A549 (cell line): ENCODE measurements at regions of chr10 and their contacts with region 1.

Region 1: GRCh38 chr10:71893920-71894319 is 42.9 kb upstream of the PSAP start:
- DNase-seq: no peak
- ATAC-seq: no peak
- H3K4me3 ChIP-seq: no peak overlapping the region
- H3K27ac ChIP-seq: no peak overlapping the region
- H3K4me1 ChIP-seq: peaks cover 17% of the 10 kb centered on the region
- CTCF ChIP-seq: no peak
- EP300 ChIP-seq: no peak
- POLR2A ChIP-seq: no peak
- RAD21 ChIP-seq: no peak

Region 2: GRCh38 chr10:71766702-71767419 is 127.1 kb before region 1 on chr10:
- CTCF ChIA-PET with region 1: interaction called, 33 read pairs
- POLR2A ChIA-PET with region 1: no interaction called
- DNase-seq: peak; percentile 85 to 98
- ATAC-seq: peak; percentile 81 to 88
- H3K4me3 ChIP-seq: no peak overlapping the region
- H3K27ac ChIP-seq: peak overlapping the region; percentile 98 to 99
- H3K4me1 ChIP-seq: peaks cover 89% of the 10 kb centered on the region
- CTCF ChIP-seq: no peak
- EP300 ChIP-seq: peak; percentile 75 to 87; a peak in 3 of 5 replicates
- POLR2A ChIP-seq: no peak
- RAD21 ChIP-seq: peak; percentile 0 to 16; a peak in 2 of 5 replicates

Region 3: GRCh38 chr10:71829171-71829570 is 64.7 kb before region 1 on chr10:
- CTCF ChIA-PET with region 1: interaction called, 217 read pairs
- POLR2A ChIA-PET with region 1: no interaction called
- DNase-seq: no peak
- ATAC-seq: no peak
- H3K4me3 ChIP-seq: no peak overlapping the region
- H3K27ac ChIP-seq: no peak overlapping the region
- H3K4me1 ChIP-seq: peaks cover 18% of the 10 kb centered on the region
- CTCF ChIP-seq: no peak
- EP300 ChIP-seq: no peak
- POLR2A ChIP-seq: no peak
- RAD21 ChIP-seq: no peak

Region 4: DNA sequence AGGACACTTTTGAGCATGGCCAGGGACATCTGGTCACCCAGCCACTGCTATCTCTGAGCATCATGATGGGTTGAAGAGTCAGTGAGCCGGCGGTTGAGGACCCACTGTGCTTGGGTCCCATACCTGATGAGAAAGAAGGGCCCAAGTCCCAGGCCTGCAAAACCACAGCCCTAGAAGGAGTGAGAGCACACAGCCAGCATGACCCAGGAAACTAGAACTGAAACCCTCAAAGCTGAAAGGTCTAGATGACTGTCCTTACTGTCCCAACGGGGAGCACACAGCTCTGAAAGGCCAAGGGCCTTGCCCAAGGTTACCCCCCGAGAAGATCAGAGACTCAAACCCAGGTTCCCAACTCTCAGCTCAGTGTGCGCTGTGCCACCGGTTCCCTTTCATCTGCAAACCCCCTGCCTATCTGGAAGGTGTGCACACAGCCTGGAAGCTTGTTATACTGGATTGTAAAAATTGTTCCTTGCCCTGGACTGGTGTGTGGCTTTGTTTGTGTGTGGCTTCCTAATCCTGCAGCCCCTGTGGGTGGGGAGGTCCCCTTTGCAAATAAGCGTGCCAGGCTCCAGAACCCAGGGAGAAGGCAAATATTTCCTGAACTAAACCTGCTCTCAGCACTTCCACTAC is 20.2 kb before region 1 on chr10:
- CTCF ChIA-PET with region 1: interaction called, 31 read pairs
- POLR2A ChIA-PET with region 1: interaction called, 7 read pairs
- DNase-seq: no peak
- ATAC-seq: no peak
- H3K4me3 ChIP-seq: no peak overlapping the region
- H3K27ac ChIP-seq: peak overlapping the region; percentile 62 to 90; a peak in 5 of 6 replicates
- H3K4me1 ChIP-seq: peaks cover 36% of the 10 kb centered on the region
- CTCF ChIP-seq: no peak
- EP300 ChIP-seq: no peak
- POLR2A ChIP-seq: no peak
- RAD21 ChIP-seq: no peak

Region 5: GRCh38 chr10:71963756-71964668 is 70.1 kb after region 1 on chr10 and contains the start of gene CHST3:
- CTCF ChIA-PET with region 1: interaction called, 22 read pairs
- POLR2A ChIA-PET with region 1: no interaction called
- DNase-seq: peak in 1 of 2 experiments; percentile 32
- ATAC-seq: peak; percentile 70 to 75
- H3K4me3 ChIP-seq: peak within 1 kb of the TSS; percentile 77
- H3K27ac ChIP-seq: peak within 1 kb of the TSS; percentile 92 to 98
- H3K4me1 ChIP-seq: peaks cover 40% of the 10 kb centered on the region
- CTCF ChIP-seq: peak; percentile 11; the same call in 1 of the 3 replicates
- EP300 ChIP-seq: no peak
- POLR2A ChIP-seq: peak; percentile 36
- RAD21 ChIP-seq: no peak
- polyA plus RNA-seq, gene CHST3: 12.8 and 13.8 TPM in 2 replicates

Region 6: DNA sequence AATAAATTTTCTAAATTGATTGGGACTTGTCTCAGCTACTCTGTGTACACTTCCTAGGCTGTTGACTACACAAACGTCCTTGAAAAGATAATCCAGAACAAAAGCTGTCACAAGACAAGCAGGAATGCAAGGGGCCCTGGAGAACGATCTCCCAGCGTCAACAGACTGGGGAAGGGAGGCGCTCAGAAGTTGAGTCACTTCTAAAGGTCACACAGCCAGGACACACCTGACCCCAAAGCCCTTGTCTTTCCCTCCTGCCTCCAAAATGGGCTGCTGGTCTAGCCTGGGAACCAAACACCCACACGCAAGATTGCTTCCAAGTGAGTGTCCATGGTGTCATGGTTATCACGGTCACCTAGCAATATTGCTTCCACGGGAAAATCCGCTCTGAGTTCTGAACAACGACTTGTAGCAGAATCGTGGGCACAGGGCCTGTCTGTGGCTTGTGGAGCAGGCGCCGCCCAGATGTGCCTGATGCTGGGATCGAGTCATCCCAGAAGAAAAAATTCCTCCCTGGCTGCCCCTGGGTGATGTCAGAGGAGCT is 144.6 kb after region 1 on chr10:
- CTCF ChIA-PET with region 1: interaction called, 141 read pairs
- POLR2A ChIA-PET with region 1: no interaction called
- DNase-seq: no peak
- ATAC-seq: no peak
- H3K4me3 ChIP-seq: no peak overlapping the region
- H3K27ac ChIP-seq: 0 out of 6 replicates have a peak overlapping the region, but pooled peaks of 1 of the 2 experiments have one; percentile 42
- H3K4me1 ChIP-seq: peaks cover 18% of the 10 kb centered on the region
- CTCF ChIP-seq: no peak
- EP300 ChIP-seq: no peak
- POLR2A ChIP-seq: no peak
- RAD21 ChIP-seq: no peak

Region 7: GRCh38 chr10:72107325-72108003 is 213.5 kb after region 1 on chr10:
- CTCF ChIA-PET with region 1: no interaction called
- POLR2A ChIA-PET with region 1: no interaction called
- DNase-seq: peak; percentile 17 to 32
- ATAC-seq: peak; percentile 47 to 68; a peak in 4 of 6 replicates
- H3K4me3 ChIP-seq: no peak overlapping the region
- H3K27ac ChIP-seq: peak overlapping the region in 1 of 2 experiments; percentile 24; a peak in 2 of 6 replicates
- H3K4me1 ChIP-seq: peaks cover 24% of the 10 kb centered on the region
- CTCF ChIP-seq: no peak
- EP300 ChIP-seq: no peak
- POLR2A ChIP-seq: no peak
- RAD21 ChIP-seq: no peak